PC-9 (cell line): ENCODE measurements at regions of chr1 and their contacts with region 1.

Region 1: DNA sequence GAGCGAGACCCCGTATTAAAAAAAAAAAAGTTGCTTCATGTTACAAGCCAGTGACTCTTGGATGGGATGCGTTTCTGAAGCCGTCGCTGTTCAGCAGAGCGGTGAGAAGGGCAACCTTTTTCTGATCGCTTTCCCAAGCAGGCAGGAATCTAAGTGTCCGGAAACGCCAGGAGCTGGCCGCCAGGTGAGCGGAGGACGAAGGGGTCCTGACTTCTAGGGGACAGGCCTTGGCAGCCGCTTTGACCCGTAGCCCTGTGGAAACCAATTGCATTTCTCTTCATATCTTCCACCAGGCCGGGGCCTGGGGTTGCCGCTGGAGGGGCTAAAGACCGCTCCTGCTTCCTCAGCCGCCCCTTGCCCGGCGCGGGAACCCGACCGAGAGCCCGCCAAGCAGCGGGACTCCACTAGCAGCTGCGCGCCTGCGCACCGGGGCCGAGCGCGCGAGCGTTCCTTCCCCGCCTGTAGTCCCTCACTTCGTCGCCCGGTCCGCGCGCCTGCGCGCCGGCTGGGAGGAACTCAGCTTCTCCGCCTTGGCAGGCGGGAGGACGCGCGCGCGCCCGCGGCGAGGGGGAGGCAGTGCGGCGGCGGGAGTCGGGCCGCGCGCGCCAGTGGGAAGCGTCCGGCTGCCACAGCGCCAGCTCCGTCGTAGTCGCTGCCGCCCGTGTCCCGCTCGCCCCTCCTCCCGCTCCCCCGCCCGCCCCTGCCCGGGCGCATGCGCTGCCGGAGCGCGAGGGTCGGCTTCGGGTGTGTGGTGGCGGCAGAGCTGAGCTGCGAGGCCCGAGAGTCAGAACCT is at the start of gene SPEN:
- DNase-seq: peak; percentile 77 to 97
- H3K4me3 ChIP-seq: peak within 1 kb of the TSS; percentile 95
- H3K27ac ChIP-seq: peak within 1 kb of the TSS; percentile 90
- H3K4me1 ChIP-seq: peaks cover 20% of the 10 kb centered on the region
- H3K27me3 ChIP-seq: no peaks in the 10 kb centered on the region
- CTCF ChIP-seq: no peak
- total RNA-seq, gene SPEN: 44.9 and 46.8 TPM in 2 replicates

Region 2: GRCh38 chr1:15559294-15559761 is 288.0 kb before region 1 on chr1:
- CTCF ChIA-PET with region 1: no interaction called
- POLR2A ChIA-PET with region 1: no interaction called
- intact Hi-C with region 1: no loop called
- DNase-seq: peak; percentile 44 to 89
- H3K4me3 ChIP-seq: peak overlapping the region; percentile 41; the same call in 1 of the 2 replicates
- H3K27ac ChIP-seq: peak overlapping the region; percentile 99
- H3K4me1 ChIP-seq: peaks cover 36% of the 10 kb centered on the region
- H3K27me3 ChIP-seq: no peaks in the 10 kb centered on the region
- CTCF ChIP-seq: no peak

Region 3: GRCh38 chr1:15885701-15886610 is 38.7 kb after region 1 on chr1:
- CTCF ChIA-PET with region 1: interaction called, 4 read pairs
- POLR2A ChIA-PET with region 1: no interaction called
- intact Hi-C with region 1: loop called (anchors 5 kb)
- DNase-seq: peak; percentile 74 to 94
- H3K4me3 ChIP-seq: peak overlapping the region; percentile 38; the same call in 1 of the 2 replicates
- H3K27ac ChIP-seq: peak overlapping the region; percentile 86
- H3K4me1 ChIP-seq: peaks cover 23% of the 10 kb centered on the region
- H3K27me3 ChIP-seq: no peaks in the 10 kb centered on the region
- CTCF ChIP-seq: no peak

Region 4: DNA sequence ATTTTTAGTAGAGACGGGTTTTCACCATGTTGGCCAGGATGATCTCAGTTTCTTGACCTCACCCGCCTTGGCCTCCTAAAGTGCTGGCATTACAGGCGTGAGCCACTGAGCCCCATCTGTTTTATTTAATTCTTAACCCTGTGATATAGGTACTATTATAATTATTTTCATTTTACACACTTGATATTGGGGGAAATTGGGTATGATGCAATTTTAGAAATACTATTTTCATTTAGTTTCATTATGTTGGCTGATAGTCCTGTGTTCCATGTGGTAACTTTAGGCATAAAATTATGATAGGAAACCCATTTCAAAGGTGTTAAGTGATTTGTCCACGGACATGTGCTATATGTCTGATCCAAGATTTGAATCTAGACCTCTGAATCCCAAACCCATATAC is 61.3 kb after region 1 on chr1:
- CTCF ChIA-PET with region 1: no interaction called
- POLR2A ChIA-PET with region 1: no interaction called
- intact Hi-C with region 1: no loop called
- DNase-seq: no peak
- H3K4me3 ChIP-seq: no peak overlapping the region
- H3K27ac ChIP-seq: no peak overlapping the region
- H3K4me1 ChIP-seq: peaks cover 12% of the 10 kb centered on the region
- H3K27me3 ChIP-seq: no peaks in the 10 kb centered on the region
- CTCF ChIP-seq: no peak

Region 5: DNA sequence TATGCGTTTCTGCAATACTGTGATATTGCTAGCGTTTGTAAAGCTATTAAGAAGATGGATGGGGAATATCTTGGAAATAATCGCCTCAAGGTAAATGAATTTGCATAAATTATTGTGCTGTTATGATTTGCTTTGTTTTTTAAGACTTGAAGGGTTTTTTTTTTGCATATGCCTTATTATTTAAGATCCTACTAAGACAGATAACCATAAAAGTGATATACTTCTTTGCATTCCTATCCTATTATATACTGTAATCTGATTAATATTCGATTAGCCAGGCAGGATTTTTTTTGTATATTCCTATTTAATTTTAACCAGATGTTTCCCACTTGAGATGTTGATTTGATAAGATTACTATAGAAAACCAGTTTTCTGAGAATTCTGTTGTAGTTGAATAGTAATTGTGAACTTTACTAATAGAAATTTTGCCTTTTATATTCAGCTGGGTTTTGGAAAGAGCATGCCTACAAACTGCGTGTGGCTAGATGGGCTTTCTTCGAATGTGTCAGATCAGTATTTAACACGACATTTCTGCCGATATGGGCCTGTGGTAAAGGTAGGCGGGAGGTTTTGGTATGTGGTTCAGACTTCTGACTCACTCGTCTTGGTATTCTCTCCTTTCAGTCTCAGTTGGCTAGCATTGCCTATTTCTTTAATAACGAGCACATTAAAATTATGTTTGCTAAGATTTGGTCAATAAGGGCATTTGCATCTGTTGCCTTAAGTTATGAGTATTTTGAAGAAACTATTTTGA is 71.8 kb after region 1 on chr1:
- CTCF ChIA-PET with region 1: no interaction called
- POLR2A ChIA-PET with region 1: interaction called, 24 read pairs
- intact Hi-C with region 1: loop called (anchors 1 kb)
- DNase-seq: peak; percentile 52 to 58
- H3K4me3 ChIP-seq: no peak overlapping the region
- H3K27ac ChIP-seq: peak overlapping the region; percentile 39
- H3K4me1 ChIP-seq: peaks cover 12% of the 10 kb centered on the region
- H3K27me3 ChIP-seq: no peaks in the 10 kb centered on the region
- CTCF ChIP-seq: no peak